Mammary epithelial cell (primary cell): ENCODE measurements at regions of chr9 and their contacts with region 1.

Region 1: GRCh38 chr9:136363606-136364370 is at the start of gene DNLZ:
- DNase-seq: peak; percentile 73
- H3K4me3 ChIP-seq: peak within 1 kb of the TSS; percentile 58 to 93 (median 72)
- H3K27ac ChIP-seq: no peak within 1 kb of the TSS
- H3K4me1 ChIP-seq: peaks cover 35% of the 10 kb centered on the region
- H3K27me3 ChIP-seq: no peaks in the 10 kb centered on the region
- CTCF ChIP-seq: peak; percentile 73 to 87
- total RNA-seq, gene DNLZ: 11.7 to 33.9 TPM

Region 2: GRCh38 chr9:136275655-136276429 is 87.9 kb before region 1 on chr9:
- CTCF ChIA-PET with region 1: no interaction called
- dilution Hi-C with region 1: loop called (anchors 5 kb)
- in situ Hi-C with region 1: no loop called
- intact Hi-C with region 1: no loop called
- DNase-seq: no peak
- H3K4me3 ChIP-seq: no peak overlapping the region
- H3K27ac ChIP-seq: no peak overlapping the region
- H3K4me1 ChIP-seq: peaks cover 11% of the 10 kb centered on the region
- H3K27me3 ChIP-seq: peaks cover 12% of the 10 kb centered on the region
- CTCF ChIP-seq: no peak

Region 3: GRCh38 chr9:136327313-136327974 is 36.3 kb before region 1 on chr9 and contains the start of gene GPSM1:
- CTCF ChIA-PET with region 1: no interaction called
- dilution Hi-C with region 1: no loop called
- in situ Hi-C with region 1: no loop called
- intact Hi-C with region 1: loop called (anchors 5 kb)
- DNase-seq: no peak
- H3K4me3 ChIP-seq: peak within 1 kb of the TSS; percentile 49 to 60 (median 57)
- H3K27ac ChIP-seq: no peak within 1 kb of the TSS
- H3K4me1 ChIP-seq: peaks cover 30% of the 10 kb centered on the region
- H3K27me3 ChIP-seq: no peaks in the 10 kb centered on the region
- CTCF ChIP-seq: no peak
- total RNA-seq, gene GPSM1: 34.3 to 34.4 TPM

Region 4: GRCh38 chr9:136345281-136346156 is 18.3 kb before region 1 on chr9:
- CTCF ChIA-PET with region 1: interaction called, 8 read pairs
- dilution Hi-C with region 1: no loop called
- in situ Hi-C with region 1: no loop called
- intact Hi-C with region 1: loop called (anchors 1 kb)
- DNase-seq: peak; percentile 76
- H3K4me3 ChIP-seq: peak overlapping the region; percentile 54 to 61 (median 58)
- H3K27ac ChIP-seq: peak overlapping the region; percentile 34
- H3K4me1 ChIP-seq: peaks cover 51% of the 10 kb centered on the region
- H3K27me3 ChIP-seq: no peaks in the 10 kb centered on the region
- CTCF ChIP-seq: peak in 1 of 2 donors; percentile 43

Region 5: DNA sequence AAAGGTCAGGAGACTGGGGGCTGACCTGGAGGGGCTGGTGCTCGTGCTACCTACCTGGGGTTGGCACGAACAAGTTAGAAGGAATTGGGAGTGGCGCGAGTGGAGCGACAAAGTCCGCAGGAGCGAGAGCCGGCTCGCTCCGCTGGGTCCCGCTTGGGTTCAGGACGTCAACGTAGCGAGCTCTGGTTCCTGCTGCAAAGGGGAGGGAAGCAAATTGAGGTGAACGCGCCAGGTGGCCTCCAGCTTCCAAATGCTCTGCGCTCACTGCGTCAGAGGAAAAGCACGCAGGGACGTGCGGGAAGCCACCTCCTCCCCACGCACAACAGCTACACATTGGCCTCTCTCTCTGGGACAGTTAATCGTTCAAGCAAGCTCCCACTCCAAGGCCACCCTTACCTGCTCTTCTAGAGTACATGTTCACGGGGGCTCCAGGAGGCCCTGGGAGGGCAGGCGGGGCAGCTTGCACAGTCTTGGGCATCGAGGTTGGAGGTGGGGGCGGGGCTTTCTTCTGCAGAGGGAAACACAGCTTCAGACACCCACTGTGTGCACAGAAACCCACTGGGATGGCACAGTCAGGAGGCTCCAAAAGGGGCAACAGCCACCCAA is 83.5 kb after region 1 on chr9:
- CTCF ChIA-PET with region 1: no interaction called
- dilution Hi-C with region 1: loop called (anchors 5 kb)
- in situ Hi-C with region 1: no loop called
- intact Hi-C with region 1: no loop called
- DNase-seq: no peak
- H3K4me3 ChIP-seq: no peak overlapping the region
- H3K27ac ChIP-seq: no peak overlapping the region
- H3K4me1 ChIP-seq: no peaks in the 10 kb centered on the region
- H3K27me3 ChIP-seq: no peaks in the 10 kb centered on the region
- CTCF ChIP-seq: no peak

Region 6: DNA sequence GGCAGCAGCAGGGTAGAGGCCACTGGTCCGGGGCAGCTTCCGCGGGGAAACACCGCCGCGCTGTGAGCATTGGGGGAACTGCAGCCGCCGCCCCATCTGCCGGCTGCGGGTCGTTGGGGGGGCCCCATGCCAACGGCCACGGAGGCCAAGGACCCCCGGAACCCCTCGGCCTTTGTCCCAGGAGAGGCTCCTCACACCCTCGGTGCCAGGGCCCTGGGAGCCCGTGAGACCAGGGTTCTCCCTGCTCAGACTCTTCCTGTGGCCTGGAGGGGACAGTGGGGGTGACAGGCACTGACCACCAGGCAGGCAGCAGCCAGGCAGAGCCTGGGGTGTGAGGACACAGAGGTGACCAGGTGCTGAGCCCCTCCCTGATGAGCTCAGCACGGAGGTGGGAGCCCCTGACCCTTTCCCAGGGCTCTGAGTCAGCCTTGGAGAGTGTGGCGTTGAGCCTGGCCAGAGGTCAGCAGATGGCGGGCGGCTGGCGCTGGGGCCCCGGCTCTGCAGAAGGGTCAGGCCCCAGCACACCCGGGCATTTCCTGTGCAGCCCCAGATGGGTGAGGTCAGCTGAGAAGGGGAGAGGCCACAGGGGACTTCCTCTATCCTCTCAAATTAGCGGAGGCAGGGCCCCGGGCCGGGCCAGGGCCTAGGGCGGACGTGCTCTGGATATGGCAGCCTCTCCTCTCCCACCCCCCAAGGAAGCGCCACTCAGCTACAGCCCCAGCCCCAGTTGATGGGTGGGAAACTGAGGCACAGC is 281.0 kb after region 1 on chr9:
- CTCF ChIA-PET with region 1: no interaction called
- dilution Hi-C with region 1: loop called (anchors 5 kb)
- in situ Hi-C with region 1: no loop called
- intact Hi-C with region 1: no loop called
- DNase-seq: no peak
- H3K4me3 ChIP-seq: no peak overlapping the region
- H3K27ac ChIP-seq: no peak overlapping the region
- H3K4me1 ChIP-seq: peaks cover 10% of the 10 kb centered on the region
- H3K27me3 ChIP-seq: peaks cover 4% of the 10 kb centered on the region
- CTCF ChIP-seq: peak; percentile 80 to 87